ENCODE measurements at regions of chr13 and their contacts with region 1.

Region 1: GRCh38 chr13:41384755-41385503 is 72.4 kb upstream of the RGCC start:
- DNase-seq: peak; percentile 9
- ATAC-seq: no peak
- H3K4me3 Mint-ChIP-seq: no peak overlapping the region
- H3K27ac Mint-ChIP-seq: no peak overlapping the region
- H3K4me1 Mint-ChIP-seq: peaks cover 26% of the 10 kb centered on the region
- H3K27me3 Mint-ChIP-seq: no peaks in the 10 kb centered on the region

Region 2: DNA sequence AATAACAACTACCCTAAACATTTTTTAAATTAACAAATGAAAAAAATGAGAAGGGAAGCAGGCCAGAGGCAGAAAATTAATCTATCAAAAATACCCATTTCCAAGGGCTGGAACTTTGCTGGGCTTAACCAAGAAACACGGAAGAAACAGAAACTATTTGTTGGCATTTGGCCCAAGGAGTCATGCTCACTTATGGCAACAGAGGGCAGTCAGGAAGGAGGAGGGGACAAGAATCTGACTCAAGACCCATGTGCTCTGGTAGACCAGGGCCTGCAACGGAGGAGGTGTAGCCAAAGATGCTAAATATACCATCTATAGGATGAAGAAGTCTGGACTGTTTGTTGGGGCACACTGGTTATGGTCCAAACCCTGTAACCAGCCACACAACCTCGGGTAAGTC is 1232.8 kb before region 1 on chr13:
- CTCF ChIA-PET with region 1: no interaction called
- POLR2A ChIA-PET with region 1: no interaction called
- intact Hi-C with region 1: no loop called
- DNase-seq: no peak
- ATAC-seq: no peak
- H3K4me3 Mint-ChIP-seq: no peak overlapping the region
- H3K27ac Mint-ChIP-seq: no peak overlapping the region
- H3K4me1 Mint-ChIP-seq: peaks cover 49% of the 10 kb centered on the region
- H3K27me3 Mint-ChIP-seq: no peaks in the 10 kb centered on the region

Region 3: GRCh38 chr13:41554626-41555386 is 169.9 kb after region 1 on chr13:
- CTCF ChIA-PET with region 1: no interaction called
- POLR2A ChIA-PET with region 1: no interaction called
- intact Hi-C with region 1: loop called in 1 of 2 experiments (anchors 10 kb)
- DNase-seq: peak; percentile 67
- ATAC-seq: peak; percentile 96
- H3K4me3 Mint-ChIP-seq: no peak overlapping the region
- H3K27ac Mint-ChIP-seq: no peak overlapping the region
- H3K4me1 Mint-ChIP-seq: peaks cover 6% of the 10 kb centered on the region
- H3K27me3 Mint-ChIP-seq: no peaks in the 10 kb centered on the region